Activated CD4-positive, alpha-beta memory T cell treated with anti-CD3 and anti-CD28 coated beads, Interleukin-2, amount 10 ng/mL, durations not matched to agents 7 days and 5 days (primary cell): ENCODE measurements at regions of chr12 and their contacts with region 1.

Region 1: GRCh38 chr12:66301944-66302826 is at the start of gene HELB:
- DNase-seq: peak; percentile 98
- H3K4me3 Mint-ChIP-seq: peak within 1 kb of the TSS; percentile 100
- H3K27ac Mint-ChIP-seq: peak within 1 kb of the TSS; percentile 99
- H3K4me1 Mint-ChIP-seq: peaks cover 52% of the 10 kb centered on the region
- H3K27me3 Mint-ChIP-seq: peaks cover 2% of the 10 kb centered on the region
- total RNA-seq, gene HELB: 34.2 to 38.3 TPM

Region 2: GRCh38 chr12:66130277-66131066 is 171.7 kb before region 1 on chr12 and contains the start of gene LLPH:
- CTCF ChIA-PET with region 1: interaction called, 4 read pairs
- POLR2A ChIA-PET with region 1: interaction called, 28 read pairs
- DNase-seq: peak; percentile 94
- H3K4me3 Mint-ChIP-seq: peak within 1 kb of the TSS; percentile 97
- H3K27ac Mint-ChIP-seq: peak within 1 kb of the TSS; percentile 94
- H3K4me1 Mint-ChIP-seq: peaks cover 67% of the 10 kb centered on the region
- H3K27me3 Mint-ChIP-seq: no peaks in the 10 kb centered on the region
- total RNA-seq, gene LLPH: 30.0 to 33.3 TPM

Region 3: DNA sequence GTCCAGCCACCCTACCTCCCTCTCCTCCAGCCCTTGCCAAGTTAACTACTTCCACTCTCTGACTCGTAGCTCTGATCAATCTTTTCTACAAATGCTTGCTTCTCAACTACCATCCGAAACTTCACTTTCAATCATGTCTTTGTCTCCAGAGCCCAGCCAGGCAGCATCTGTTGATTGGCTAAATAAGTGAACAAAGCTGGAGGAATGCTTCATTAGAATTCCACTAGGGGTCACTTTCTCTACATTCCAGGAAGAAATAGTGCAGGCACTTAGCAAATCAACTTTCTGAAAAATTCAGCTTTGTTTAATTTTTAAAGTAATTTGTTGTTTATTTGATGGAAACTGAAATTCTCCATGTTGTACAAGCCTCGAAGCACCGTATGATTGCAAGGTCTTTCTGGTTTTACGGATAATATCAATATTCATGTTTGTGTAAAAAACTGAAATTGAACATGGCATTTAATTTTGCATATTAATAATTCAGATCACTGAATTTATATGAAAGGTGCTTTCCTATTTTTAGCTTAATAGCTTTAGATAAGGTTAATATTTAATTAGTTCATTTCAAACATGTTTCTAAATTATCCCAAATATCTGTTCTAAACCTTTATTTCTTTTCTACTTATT is 32.3 kb before region 1 on chr12:
- CTCF ChIA-PET with region 1: interaction called, 18 read pairs
- POLR2A ChIA-PET with region 1: interaction called, 9 read pairs
- DNase-seq: peak; percentile 29
- H3K4me3 Mint-ChIP-seq: no peak overlapping the region
- H3K27ac Mint-ChIP-seq: no peak overlapping the region
- H3K4me1 Mint-ChIP-seq: peaks cover 6% of the 10 kb centered on the region
- H3K27me3 Mint-ChIP-seq: no peaks in the 10 kb centered on the region

Region 4: GRCh38 chr12:66279123-66279712 is 23.0 kb before region 1 on chr12:
- CTCF ChIA-PET with region 1: interaction called, 19 read pairs
- POLR2A ChIA-PET with region 1: interaction called, 28 read pairs
- DNase-seq: peak; percentile 58
- H3K4me3 Mint-ChIP-seq: no peak overlapping the region
- H3K27ac Mint-ChIP-seq: no peak overlapping the region
- H3K4me1 Mint-ChIP-seq: peaks cover 25% of the 10 kb centered on the region
- H3K27me3 Mint-ChIP-seq: no peaks in the 10 kb centered on the region

Region 5: DNA sequence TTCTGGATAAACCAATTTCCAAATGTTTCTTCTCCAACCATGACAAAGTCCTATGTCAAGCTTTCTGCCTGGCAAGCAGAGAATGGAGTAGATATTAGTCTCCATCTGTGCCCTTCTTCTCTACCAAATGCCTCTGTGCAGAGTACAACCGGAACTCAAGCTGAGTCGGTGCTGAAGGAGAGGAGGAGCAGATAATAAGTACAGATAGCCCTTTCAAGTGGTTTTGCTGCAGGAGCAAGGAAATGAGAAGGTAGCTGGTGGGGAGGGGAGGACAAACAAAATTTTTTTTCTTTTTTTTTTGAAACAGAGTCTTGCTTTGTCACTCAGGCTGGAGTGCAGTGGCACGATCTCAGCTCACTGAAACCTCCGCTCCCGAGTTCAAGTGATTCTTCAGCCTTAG is 14.1 kb before region 1 on chr12:
- CTCF ChIA-PET with region 1: interaction called, 8 read pairs
- POLR2A ChIA-PET with region 1: interaction called, 94 read pairs
- DNase-seq: peak; percentile 69
- H3K4me3 Mint-ChIP-seq: peak overlapping the region; percentile 33
- H3K27ac Mint-ChIP-seq: peak overlapping the region; percentile 83
- H3K4me1 Mint-ChIP-seq: peaks cover 69% of the 10 kb centered on the region
- H3K27me3 Mint-ChIP-seq: no peaks in the 10 kb centered on the region

Region 6: GRCh38 chr12:66312189-66312588 is 10.0 kb after region 1 on chr12:
- CTCF ChIA-PET with region 1: interaction called, 3 read pairs
- POLR2A ChIA-PET with region 1: interaction called, 21 read pairs
- DNase-seq: no peak
- H3K4me3 Mint-ChIP-seq: no peak overlapping the region
- H3K27ac Mint-ChIP-seq: no peak overlapping the region
- H3K4me1 Mint-ChIP-seq: peaks cover 50% of the 10 kb centered on the region
- H3K27me3 Mint-ChIP-seq: no peaks in the 10 kb centered on the region